ENCODE measurements at regions of chr6 and their contacts with region 1.

Region 1: GRCh38 chr6:38012573-38012972 is 193.0 kb downstream of the ZFAND3 start:
- DNase-seq: no peak
- H3K4me3 ChIP-seq: no peak overlapping the region
- H3K27ac ChIP-seq: no peak overlapping the region
- H3K4me1 ChIP-seq: peaks cover 0 to 16% (median 8%) of the 10 kb centered on the region in 4 donors
- H3K27me3 ChIP-seq: no peaks in the 10 kb centered on the region
- CTCF ChIP-seq: peak; percentile 36 to 50 (median 42)
- EP300 ChIP-seq: no peak
- POLR2A ChIP-seq: no peak

Region 2: GRCh38 chr6:37489660-37490361 is 522.8 kb before region 1 on chr6:
- in situ Hi-C with region 1: no loop called
- intact Hi-C with region 1: no loop called
- DNase-seq: no peak
- H3K4me3 ChIP-seq: no peak overlapping the region
- H3K27ac ChIP-seq: no peak overlapping the region
- H3K4me1 ChIP-seq: peaks cover 0 to 10% (median 0%) of the 10 kb centered on the region in 4 donors
- H3K27me3 ChIP-seq: no peaks in the 10 kb centered on the region
- CTCF ChIP-seq: peak in 1 of 5 experiments; percentile 8
- EP300 ChIP-seq: no peak
- POLR2A ChIP-seq: no peak

Region 3: DNA sequence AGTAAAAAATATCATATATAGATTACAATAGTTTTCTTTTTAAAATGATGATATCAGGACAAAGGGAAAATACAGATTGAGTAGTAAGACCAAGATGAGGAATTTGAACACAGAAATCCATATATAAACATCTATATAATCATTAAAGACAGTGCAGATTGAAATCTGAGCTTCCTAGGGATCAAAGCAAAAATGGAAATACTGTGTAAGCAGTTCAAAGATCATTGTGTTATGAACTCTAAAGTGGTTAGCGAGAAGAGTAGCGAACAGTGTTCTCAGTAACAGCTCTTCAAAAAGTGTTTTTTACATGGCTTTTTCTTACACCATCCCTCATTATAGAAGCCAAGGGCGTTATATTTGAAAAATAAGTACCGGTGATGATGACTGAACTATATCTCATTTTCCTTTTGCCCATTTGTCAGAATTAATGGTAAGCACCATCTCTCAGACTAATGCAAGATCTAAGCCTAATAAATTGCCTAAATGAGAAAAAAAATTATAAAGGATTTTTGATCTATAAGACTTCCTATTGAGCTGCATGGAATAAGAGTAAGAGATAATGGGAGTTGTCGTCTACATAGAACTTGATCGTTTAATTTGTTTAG is 33.2 kb after region 1 on chr6:
- in situ Hi-C with region 1: no loop called
- intact Hi-C with region 1: loop called (anchors 1 kb)
- DNase-seq: no peak
- H3K4me3 ChIP-seq: no peak overlapping the region
- H3K27ac ChIP-seq: no peak overlapping the region
- H3K4me1 ChIP-seq: peaks cover 0 to 4% (median 0%) of the 10 kb centered on the region in 4 donors
- H3K27me3 ChIP-seq: no peaks in the 10 kb centered on the region
- CTCF ChIP-seq: no peak
- EP300 ChIP-seq: no peak
- POLR2A ChIP-seq: no peak

Region 4: GRCh38 chr6:38179300-38179699 is 166.7 kb after region 1 on chr6:
- in situ Hi-C with region 1: no loop called
- intact Hi-C with region 1: no loop called
- DNase-seq: no peak
- H3K4me3 ChIP-seq: no peak overlapping the region
- H3K27ac ChIP-seq: no peak overlapping the region
- H3K4me1 ChIP-seq: peaks cover 0 to 18% (median 9%) of the 10 kb centered on the region in 4 donors
- H3K27me3 ChIP-seq: no peaks in the 10 kb centered on the region
- CTCF ChIP-seq: no peak
- EP300 ChIP-seq: no peak
- POLR2A ChIP-seq: no peak

Region 5: DNA sequence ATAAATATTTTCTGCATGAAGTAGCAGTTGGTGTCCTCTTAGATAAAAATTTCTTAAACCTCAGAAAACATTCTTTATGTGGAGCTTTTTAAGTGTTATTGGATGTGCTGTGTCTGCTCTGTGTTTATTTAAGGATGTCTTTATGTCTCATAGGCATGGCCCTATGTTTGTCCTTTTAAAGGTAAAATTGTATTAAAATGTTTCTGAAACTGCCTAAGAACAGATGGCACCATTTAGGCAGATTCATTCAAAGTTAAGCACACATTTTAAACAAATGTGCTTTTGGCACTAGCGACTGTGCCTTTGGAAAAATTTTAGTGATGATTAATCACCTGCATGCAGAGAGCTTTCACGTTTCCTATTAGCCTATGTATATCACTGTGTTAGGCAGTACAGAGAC is 1587.4 kb after region 1 on chr6:
- in situ Hi-C with region 1: no loop called
- intact Hi-C with region 1: no loop called
- DNase-seq: no peak
- H3K4me3 ChIP-seq: no peak overlapping the region
- H3K27ac ChIP-seq: no peak overlapping the region
- H3K4me1 ChIP-seq: no peaks in the 10 kb centered on the region
- H3K27me3 ChIP-seq: no peaks in the 10 kb centered on the region
- CTCF ChIP-seq: no peak
- EP300 ChIP-seq: no peak
- POLR2A ChIP-seq: no peak